Mammary epithelial cell (primary cell): ENCODE measurements at regions of chr3 and their contacts with region 1.

Region 1: DNA sequence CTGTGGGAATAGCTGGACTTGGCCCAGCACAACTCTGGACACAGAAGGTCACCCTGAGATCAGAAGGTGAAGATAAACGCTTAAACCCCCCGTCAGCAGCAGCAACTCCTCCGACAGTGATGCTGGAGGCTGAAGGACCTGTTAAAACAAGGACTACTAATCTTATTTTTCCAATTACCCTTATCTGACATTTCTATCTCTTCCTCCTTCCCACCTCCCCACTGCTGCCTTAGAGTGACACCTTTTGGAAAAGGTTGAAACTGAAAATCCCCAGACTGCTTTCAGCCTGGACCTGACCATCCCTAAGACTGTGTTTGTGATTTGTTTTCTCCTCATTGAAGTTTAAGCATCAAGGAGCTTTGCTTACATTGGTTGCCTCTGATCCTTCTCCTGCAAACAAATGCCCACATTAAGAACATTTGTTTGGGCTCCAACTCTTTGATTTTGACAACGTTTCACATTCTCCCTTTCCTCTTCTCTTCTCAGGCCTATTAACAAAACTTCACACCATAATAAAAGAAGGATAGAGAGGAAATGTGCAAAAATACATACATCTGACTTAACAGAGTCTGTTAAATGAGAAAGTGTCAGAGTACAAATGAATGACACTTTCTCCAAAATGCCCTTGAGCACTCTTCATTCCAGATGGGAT is 410.6 kb upstream of the WNT5A start:
- DNase-seq: peak; percentile 45
- H3K4me3 ChIP-seq: no peak overlapping the region
- H3K27ac ChIP-seq: no peak overlapping the region
- H3K4me1 ChIP-seq: no peaks in the 10 kb centered on the region
- H3K27me3 ChIP-seq: no peaks in the 10 kb centered on the region
- CTCF ChIP-seq: peak; percentile 48 to 84

Region 2: DNA sequence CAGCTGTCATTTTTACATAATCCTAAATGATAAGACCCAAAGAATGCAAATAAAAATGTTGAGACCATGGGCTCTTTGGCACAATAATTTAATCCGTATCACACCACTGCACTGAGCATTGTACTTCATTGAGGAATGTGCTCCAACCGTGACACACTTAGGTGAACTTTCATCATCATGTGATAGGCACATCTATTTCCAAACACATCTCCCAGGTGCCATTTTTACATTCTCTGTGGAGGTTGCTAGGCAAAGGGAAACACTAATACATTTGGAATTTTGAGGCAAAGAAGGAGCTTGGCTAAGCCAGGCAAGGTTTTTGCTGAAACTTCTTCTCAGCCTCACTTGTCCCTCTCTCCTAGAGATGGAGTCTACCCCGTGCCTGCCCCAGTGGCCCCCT is 1038.5 kb before region 1 on chr3:
- CTCF ChIA-PET with region 1: no interaction called
- dilution Hi-C with region 1: no loop called
- in situ Hi-C with region 1: loop called in 1 of 2 experiments (anchors 10 kb)
- intact Hi-C with region 1: no loop called
- DNase-seq: peak; percentile 81
- H3K4me3 ChIP-seq: no peak overlapping the region
- H3K27ac ChIP-seq: no peak overlapping the region
- H3K4me1 ChIP-seq: peaks cover 32% of the 10 kb centered on the region
- H3K27me3 ChIP-seq: no peaks in the 10 kb centered on the region
- CTCF ChIP-seq: no peak

Region 3: DNA sequence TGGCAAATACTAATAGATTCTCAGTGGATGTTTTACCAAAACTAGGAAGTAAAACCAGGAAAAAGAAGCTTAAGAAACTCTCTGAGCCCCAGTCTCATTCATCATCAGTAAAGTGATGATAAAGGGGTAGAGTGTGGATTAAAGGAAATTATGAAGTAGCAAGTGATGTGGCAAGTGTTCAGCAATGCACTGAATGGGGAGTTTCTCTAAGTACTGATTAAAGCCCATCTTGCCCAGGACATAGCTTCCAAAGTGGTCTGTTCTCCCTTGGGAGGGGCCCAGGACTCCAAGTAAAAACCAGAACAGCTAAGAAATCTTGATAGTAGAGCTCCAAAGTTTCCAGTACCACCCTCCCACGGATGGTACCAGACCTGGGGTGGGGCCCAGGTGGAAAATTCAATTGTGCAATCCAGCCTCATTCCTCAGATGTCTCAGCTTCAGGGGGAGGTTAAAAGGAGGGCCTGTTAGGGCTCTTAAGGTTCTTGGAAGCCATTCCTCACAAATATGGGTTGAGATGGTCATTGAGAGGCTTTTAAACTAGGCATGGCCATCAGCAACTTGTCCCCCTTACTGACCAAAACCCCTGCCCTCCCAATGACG is 547.7 kb before region 1 on chr3:
- CTCF ChIA-PET with region 1: no interaction called
- dilution Hi-C with region 1: no loop called
- in situ Hi-C with region 1: no loop called
- intact Hi-C with region 1: no loop called
- DNase-seq: no peak
- H3K4me3 ChIP-seq: no peak overlapping the region
- H3K27ac ChIP-seq: no peak overlapping the region
- H3K4me1 ChIP-seq: no peaks in the 10 kb centered on the region
- H3K27me3 ChIP-seq: no peaks in the 10 kb centered on the region
- CTCF ChIP-seq: no peak

Region 4: GRCh38 chr3:55556619-55557537 is 340.8 kb before region 1 on chr3:
- CTCF ChIA-PET with region 1: no interaction called
- dilution Hi-C with region 1: no loop called
- in situ Hi-C with region 1: no loop called
- intact Hi-C with region 1: no loop called
- DNase-seq: peak; percentile 2
- H3K4me3 ChIP-seq: no peak overlapping the region
- H3K27ac ChIP-seq: no peak overlapping the region
- H3K4me1 ChIP-seq: no peaks in the 10 kb centered on the region
- H3K27me3 ChIP-seq: peaks cover 6% of the 10 kb centered on the region
- CTCF ChIP-seq: no peak

Region 5: DNA sequence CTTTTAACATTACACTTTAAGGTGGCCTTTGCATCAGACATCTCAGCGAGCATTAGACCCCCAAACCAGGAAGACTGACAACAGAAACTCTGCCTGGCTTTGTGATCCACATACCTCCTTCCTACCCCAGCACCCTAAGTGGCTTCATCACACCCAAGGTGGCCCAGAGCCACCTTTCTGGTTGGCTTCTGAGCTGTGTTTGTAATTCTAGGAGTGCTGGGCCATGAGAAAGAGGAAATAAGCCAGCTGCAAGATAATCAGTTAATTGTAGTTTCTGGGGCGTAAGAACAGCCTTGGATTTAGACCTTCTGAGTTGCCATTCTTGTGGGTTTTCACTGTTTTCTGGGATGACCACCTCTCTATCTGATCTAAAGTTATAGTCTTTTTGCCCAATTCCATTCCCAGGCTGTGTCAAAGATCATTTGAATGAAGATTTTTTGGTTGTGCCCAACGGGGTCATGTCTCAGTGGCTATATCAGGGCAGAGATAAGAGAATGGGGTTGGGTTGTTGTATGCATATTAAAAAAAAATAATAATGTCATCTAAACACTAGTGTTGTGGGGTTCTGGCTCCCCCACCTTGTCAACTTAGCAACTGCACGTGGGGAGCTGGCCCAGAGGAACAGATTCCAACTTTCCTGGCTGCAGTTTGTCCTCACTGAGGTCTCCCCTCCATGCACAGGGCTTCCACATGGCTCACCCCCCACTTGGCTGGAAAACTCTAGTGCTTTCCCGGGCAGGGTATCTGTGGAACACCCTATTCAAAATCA is 175.8 kb before region 1 on chr3:
- CTCF ChIA-PET with region 1: no interaction called
- dilution Hi-C with region 1: no loop called
- in situ Hi-C with region 1: loop called in 1 of 2 experiments (anchors 25 kb)
- intact Hi-C with region 1: loop called (anchors 1 kb)
- DNase-seq: peak; percentile 27
- H3K4me3 ChIP-seq: no peak overlapping the region
- H3K27ac ChIP-seq: no peak overlapping the region
- H3K4me1 ChIP-seq: no peaks in the 10 kb centered on the region
- H3K27me3 ChIP-seq: peaks cover 4% of the 10 kb centered on the region
- CTCF ChIP-seq: peak; percentile 73 to 76

Region 6: GRCh38 chr3:55746808-55747413 is 150.8 kb before region 1 on chr3:
- CTCF ChIA-PET with region 1: no interaction called
- dilution Hi-C with region 1: no loop called
- in situ Hi-C with region 1: loop called in 1 of 2 experiments (anchors 25 kb)
- intact Hi-C with region 1: loop called (anchors 5 kb)
- DNase-seq: no peak
- H3K4me3 ChIP-seq: no peak overlapping the region
- H3K27ac ChIP-seq: no peak overlapping the region
- H3K4me1 ChIP-seq: peaks cover 11% of the 10 kb centered on the region
- H3K27me3 ChIP-seq: no peaks in the 10 kb centered on the region
- CTCF ChIP-seq: peak; percentile 35 to 50

Region 7: GRCh38 chr3:55818485-55818884 is 79.2 kb before region 1 on chr3:
- CTCF ChIA-PET with region 1: no interaction called
- dilution Hi-C with region 1: no loop called
- in situ Hi-C with region 1: no loop called
- intact Hi-C with region 1: loop called (anchors 1 kb)
- DNase-seq: no peak
- H3K4me3 ChIP-seq: no peak overlapping the region
- H3K27ac ChIP-seq: no peak overlapping the region
- H3K4me1 ChIP-seq: peaks cover under 1% of the 10 kb centered on the region
- H3K27me3 ChIP-seq: no peaks in the 10 kb centered on the region
- CTCF ChIP-seq: peak; percentile 3 to 20

Region 8: GRCh38 chr3:56042326-56042951 is 144.7 kb after region 1 on chr3:
- CTCF ChIA-PET with region 1: interaction called, 4 read pairs
- dilution Hi-C with region 1: no loop called
- in situ Hi-C with region 1: no loop called
- intact Hi-C with region 1: loop called (anchors 5 kb)
- DNase-seq: peak; percentile 16
- H3K4me3 ChIP-seq: no peak overlapping the region
- H3K27ac ChIP-seq: no peak overlapping the region
- H3K4me1 ChIP-seq: no peaks in the 10 kb centered on the region
- H3K27me3 ChIP-seq: no peaks in the 10 kb centered on the region
- CTCF ChIP-seq: peak; percentile 54 to 70

Region 9: DNA sequence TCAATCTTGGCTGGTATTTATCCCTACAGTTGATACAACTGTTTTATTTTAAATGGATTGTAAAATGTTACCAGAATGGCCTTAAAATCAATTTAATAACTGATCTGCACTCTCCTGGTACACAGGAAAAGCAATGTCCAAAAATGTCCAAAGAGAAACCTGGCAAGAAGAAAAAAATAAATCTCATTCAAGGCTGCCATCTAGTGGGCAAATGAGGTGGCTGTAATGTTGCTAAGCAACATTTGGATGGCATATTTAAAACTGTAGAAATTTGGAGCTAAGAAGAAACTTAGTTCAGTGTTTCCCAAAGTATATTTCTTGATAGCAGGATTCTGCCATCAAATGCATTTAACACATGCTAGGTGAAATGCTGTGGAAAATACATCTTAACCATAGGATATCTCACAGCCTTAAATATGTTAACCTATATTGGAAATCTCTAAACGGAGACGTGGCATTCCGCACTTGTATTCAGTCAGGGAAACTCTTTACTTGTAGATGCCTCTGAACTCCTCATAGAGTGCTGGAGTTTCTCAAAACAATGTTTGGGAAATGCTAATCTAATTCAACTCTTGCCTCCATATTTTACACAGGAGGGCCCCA is 353.7 kb after region 1 on chr3:
- CTCF ChIA-PET with region 1: interaction called, 3 read pairs
- dilution Hi-C with region 1: no loop called
- in situ Hi-C with region 1: no loop called
- intact Hi-C with region 1: loop called (anchors 1 kb)
- DNase-seq: peak; percentile 31
- H3K4me3 ChIP-seq: no peak overlapping the region
- H3K27ac ChIP-seq: no peak overlapping the region
- H3K4me1 ChIP-seq: no peaks in the 10 kb centered on the region
- H3K27me3 ChIP-seq: peaks cover 3% of the 10 kb centered on the region
- CTCF ChIP-seq: peak; percentile 71 to 77